Gastrocnemius medialis (tissue), 4 donors: ENCODE measurements at regions of chr14 and their contacts with region 1.

Region 1: DNA sequence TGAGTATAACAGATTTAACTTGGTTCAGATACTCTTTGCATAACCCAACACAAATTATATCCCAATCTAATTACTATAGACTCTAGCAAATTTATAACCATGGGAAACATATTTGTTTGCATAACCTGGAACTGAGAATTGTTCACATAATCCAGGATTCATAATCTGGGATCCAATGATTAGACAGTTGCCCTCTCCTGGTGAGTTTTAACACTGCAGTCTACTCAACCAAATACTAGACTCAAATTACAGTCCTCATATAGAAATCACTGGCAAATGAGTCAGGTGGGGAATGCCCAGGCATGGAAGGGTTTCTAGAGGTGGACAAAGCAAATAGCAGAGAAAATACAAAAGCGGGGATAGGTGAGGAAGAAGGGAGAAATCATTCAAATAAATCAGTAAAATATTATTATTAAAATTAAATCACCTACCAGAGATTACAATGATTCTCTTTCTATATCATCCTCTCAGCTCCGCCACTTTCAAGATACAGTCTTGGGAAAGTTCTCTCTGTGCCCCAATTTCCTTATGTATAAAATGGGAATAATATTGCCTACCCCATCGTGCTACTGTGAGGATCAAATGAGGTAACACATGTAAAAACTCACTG is 9.4 kb downstream of the GCH1 start:
- DNase-seq: no peak
- ATAC-seq: peak; percentile 42 to 58
- H3K4me3 ChIP-seq: no peak overlapping the region
- H3K27ac ChIP-seq: no peak overlapping the region
- H3K4me1 ChIP-seq: no peaks in the 10 kb centered on the region
- H3K27me3 ChIP-seq: no peaks in the 10 kb centered on the region
- CTCF ChIP-seq: peak; percentile 44 to 65 (median 54)
- POLR2A ChIP-seq: no peak

Region 2: GRCh38 chr14:54722781-54723432 is 170.3 kb before region 1 on chr14:
- in situ Hi-C with region 1: no loop called
- intact Hi-C with region 1: no loop called
- DNase-seq: no peak
- ATAC-seq: peak in 1 of 2 donors; percentile 77
- H3K4me3 ChIP-seq: no peak overlapping the region
- H3K27ac ChIP-seq: peak overlapping the region; percentile 19 to 37 (median 34)
- H3K4me1 ChIP-seq: peaks cover 31 to 56% of the 10 kb centered on the region in 2 donors
- H3K27me3 ChIP-seq: no peaks in the 10 kb centered on the region
- CTCF ChIP-seq: peak in 4 of 5 experiments; percentile 27 to 61 (median 36)
- POLR2A ChIP-seq: no peak

Region 3: GRCh38 chr14:54981698-54982097 is 88.4 kb after region 1 on chr14:
- in situ Hi-C with region 1: no loop called
- intact Hi-C with region 1: no loop called
- DNase-seq: no peak
- ATAC-seq: no peak
- H3K4me3 ChIP-seq: no peak overlapping the region
- H3K27ac ChIP-seq: no peak overlapping the region
- H3K4me1 ChIP-seq: no peaks in the 10 kb centered on the region
- H3K27me3 ChIP-seq: no peaks in the 10 kb centered on the region
- CTCF ChIP-seq: peak in 1 of 5 experiments; percentile 27
- POLR2A ChIP-seq: no peak

Region 4: DNA sequence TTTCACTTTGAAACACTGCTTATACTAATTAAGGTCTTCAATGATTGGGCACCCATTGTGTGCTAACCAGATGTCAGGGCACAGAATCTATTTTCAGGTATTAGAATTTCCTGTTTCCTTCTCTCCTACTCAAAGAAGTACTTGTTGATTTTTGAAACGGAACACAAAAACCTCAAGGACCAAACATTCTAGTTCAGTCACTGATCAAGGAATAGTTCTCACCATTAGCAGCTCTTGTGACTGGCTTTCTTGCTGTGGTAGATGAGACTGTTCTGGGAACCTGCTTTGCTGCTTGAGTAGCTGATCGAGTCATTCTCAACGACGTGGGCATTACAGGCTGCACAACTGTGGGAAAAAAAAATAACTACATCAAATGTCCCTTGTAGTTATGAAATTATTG is 287.2 kb after region 1 on chr14:
- in situ Hi-C with region 1: no loop called
- intact Hi-C with region 1: loop called (anchors 5 kb)
- DNase-seq: no peak
- ATAC-seq: no peak
- H3K4me3 ChIP-seq: no peak overlapping the region
- H3K27ac ChIP-seq: no peak overlapping the region
- H3K4me1 ChIP-seq: no peaks in the 10 kb centered on the region
- H3K27me3 ChIP-seq: no peaks in the 10 kb centered on the region
- CTCF ChIP-seq: no peak
- POLR2A ChIP-seq: no peak

Region 5: DNA sequence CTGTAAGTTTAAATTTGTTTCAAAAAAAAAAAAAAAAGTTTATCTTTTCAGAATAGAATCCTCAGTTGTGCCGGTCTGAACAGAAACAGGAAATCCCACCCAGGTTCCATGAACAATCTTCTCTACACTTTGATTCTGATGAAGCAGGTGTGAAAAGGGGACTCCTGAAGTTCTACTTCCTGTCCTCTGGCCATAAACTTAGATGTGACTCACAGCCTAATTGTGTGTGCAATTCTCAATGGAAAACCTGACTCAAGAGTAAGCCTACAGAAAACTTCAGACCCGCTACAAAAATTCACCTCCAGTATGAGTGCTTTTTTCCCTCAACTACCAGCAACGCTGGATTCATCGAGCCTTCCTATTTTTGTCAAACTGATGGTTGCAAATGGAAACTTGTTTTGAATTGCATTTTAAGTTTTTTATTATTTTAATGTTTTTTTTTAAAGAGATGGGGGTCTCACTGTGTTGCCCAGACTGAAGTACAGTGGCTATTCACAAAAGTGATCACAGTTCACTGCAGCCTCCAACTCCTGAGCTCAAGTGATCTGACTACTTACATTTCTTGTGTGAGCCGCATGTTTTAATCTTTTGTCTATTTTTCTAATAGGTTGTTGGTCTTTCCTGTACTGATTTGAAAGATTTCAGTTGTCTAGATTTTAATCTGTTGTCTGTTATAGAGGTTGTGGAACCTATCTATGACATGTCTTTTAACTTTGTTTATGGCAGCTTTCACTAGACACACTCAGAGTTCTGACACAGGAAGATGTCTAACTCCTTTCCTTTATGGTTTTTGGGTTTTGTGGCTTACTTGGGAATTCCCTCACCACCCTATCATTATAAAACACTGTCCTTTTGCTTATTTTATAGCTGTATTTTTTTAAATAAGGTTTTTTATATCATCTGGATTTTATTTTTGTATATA is 480.8 kb after region 1 on chr14:
- in situ Hi-C with region 1: no loop called
- intact Hi-C with region 1: no loop called
- DNase-seq: no peak
- ATAC-seq: peak in 1 of 2 donors; percentile 71
- H3K4me3 ChIP-seq: no peak overlapping the region
- H3K27ac ChIP-seq: peak overlapping the region in 2 of 4 donors; percentile 10 to 48
- H3K4me1 ChIP-seq: no peaks in the 10 kb centered on the region
- H3K27me3 ChIP-seq: no peaks in the 10 kb centered on the region
- CTCF ChIP-seq: no peak
- POLR2A ChIP-seq: no peak